Gastrocnemius medialis (tissue), 4 donors: ENCODE measurements at regions of chr11 and their contacts with region 1.

Region 1: DNA sequence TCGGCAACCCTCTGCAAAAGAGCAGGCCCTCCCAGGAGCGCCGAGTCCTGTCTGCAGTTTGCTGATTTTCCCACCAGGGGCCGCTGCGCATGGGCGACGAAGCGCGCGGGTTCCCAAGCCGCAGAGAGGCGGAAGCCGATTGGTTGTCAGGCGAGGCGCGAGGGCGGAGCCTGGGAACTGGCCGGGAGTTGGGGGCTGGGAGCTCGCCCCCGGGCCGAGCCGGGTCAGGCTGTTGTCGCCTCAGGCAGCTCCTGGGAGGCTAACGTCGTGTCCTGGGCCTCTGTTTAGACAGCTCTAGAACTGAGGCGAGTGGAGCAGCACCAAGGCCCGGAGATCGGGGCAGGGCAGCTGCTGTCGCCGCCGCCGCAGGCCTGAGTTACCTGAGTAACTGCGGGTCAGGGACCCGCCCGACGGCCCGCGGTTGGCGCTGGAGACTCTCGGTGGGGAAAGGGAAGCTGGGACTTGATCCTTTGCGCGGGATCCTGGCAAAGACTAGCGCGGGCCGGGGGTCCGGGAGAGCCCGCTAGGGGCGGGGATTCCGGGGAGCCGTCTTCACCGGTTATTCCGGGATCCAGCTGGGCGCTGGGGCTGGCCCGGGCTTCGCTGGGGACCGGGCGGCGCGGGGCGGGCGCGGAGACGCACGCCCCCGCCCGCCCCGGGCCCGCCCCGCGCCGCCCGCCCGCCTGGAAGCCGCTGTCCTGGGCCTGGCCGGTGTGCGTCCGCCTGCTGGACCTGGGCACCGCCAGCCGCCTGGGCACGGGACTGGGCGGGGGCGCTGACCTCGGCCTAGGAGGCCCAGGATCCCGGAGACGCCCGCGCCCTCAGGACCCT is at the start of gene STIM1:
- DNase-seq: peak; percentile 93 to 95
- ATAC-seq: peak; percentile 57 to 61
- H3K4me3 ChIP-seq: peak within 1 kb of the TSS; percentile 91 to 97 (median 96)
- H3K27ac ChIP-seq: peak within 1 kb of the TSS; percentile 99 to 100 (median 100)
- H3K4me1 ChIP-seq: peaks cover 53 to 57% of the 10 kb centered on the region in 2 donors
- H3K27me3 ChIP-seq: no peaks in the 10 kb centered on the region
- CTCF ChIP-seq: peak; percentile 97 to 99 (median 99)
- POLR2A ChIP-seq: peak; percentile 91 to 95
- total RNA-seq, gene STIM1: 45.9 to 132 (median 87.3) TPM

Region 2: GRCh38 chr11:3929649-3930048 is 74.5 kb after region 1 on chr11:
- in situ Hi-C with region 1: loop called in 1 of 4 experiments (anchors 10 kb)
- intact Hi-C with region 1: loop called (anchors 5 kb)
- DNase-seq: peak; percentile 70 to 81
- ATAC-seq: peak; percentile 96
- H3K4me3 ChIP-seq: no peak overlapping the region
- H3K27ac ChIP-seq: peak overlapping the region; percentile 81 to 92 (median 87)
- H3K4me1 ChIP-seq: peaks cover 75 to 80% of the 10 kb centered on the region in 2 donors
- H3K27me3 ChIP-seq: no peaks in the 10 kb centered on the region
- CTCF ChIP-seq: no peak
- POLR2A ChIP-seq: peak; percentile 20 to 31

Region 3: GRCh38 chr11:3947061-3947460 is 91.9 kb after region 1 on chr11:
- in situ Hi-C with region 1: loop called in 1 of 4 experiments (anchors 25 kb)
- intact Hi-C with region 1: loop called (anchors 5 kb)
- DNase-seq: peak; percentile 40 to 54
- ATAC-seq: peak; percentile 26 to 56
- H3K4me3 ChIP-seq: peak overlapping the region in 1 of 4 donors; percentile 4
- H3K27ac ChIP-seq: peak overlapping the region; percentile 81 to 92 (median 84)
- H3K4me1 ChIP-seq: peaks cover 91 to 94% of the 10 kb centered on the region in 2 donors
- H3K27me3 ChIP-seq: no peaks in the 10 kb centered on the region
- CTCF ChIP-seq: no peak
- POLR2A ChIP-seq: no peak

Region 4: DNA sequence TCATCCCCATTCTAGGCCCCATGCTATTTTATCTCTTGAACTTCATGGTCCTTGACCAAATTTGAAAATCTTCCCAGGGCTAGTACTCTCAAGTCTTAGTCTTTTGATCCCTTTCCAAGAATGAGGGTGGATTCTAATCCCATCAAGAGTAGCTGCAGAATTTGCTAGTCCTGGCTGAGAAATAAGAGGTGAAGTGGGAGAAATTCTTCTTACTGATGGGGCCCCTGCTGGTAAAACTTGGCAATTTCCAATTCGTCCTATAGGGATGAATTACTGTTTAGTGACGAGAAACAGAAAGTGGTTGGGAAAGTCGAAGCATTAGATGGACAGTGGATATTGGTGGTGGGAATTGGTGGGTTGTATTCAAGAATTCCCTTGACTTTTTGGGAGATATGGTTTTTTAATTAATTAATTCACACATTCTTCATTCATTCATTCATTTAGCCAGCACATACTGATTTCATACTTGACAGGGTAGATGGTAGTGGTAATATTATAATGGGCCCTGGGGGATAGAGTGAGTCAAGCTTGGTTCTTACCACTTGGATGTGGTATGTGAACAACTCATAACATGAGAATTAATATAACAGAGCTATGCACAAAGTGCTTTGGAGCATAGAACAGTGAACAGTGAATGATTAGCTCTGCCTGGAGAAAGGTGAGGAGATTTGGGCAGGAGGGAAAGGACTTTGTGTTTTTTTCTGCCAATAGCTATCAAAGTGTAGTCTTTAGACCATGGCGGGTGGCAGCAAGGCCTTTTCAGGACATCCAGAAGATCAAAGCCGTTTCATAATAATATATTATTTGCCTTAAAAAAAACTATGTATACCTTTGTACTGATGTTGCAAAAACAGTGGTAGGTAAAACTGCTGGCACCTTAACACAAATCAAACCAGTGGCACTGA is 104.1 kb after region 1 on chr11:
- in situ Hi-C with region 1: loop called in 1 of 4 experiments (anchors 25 kb)
- intact Hi-C with region 1: no loop called
- DNase-seq: no peak
- ATAC-seq: no peak
- H3K4me3 ChIP-seq: no peak overlapping the region
- H3K27ac ChIP-seq: no peak overlapping the region
- H3K4me1 ChIP-seq: peaks cover 52 to 60% of the 10 kb centered on the region in 2 donors
- H3K27me3 ChIP-seq: no peaks in the 10 kb centered on the region
- CTCF ChIP-seq: peak in 1 of 5 experiments; percentile 20
- POLR2A ChIP-seq: no peak

Region 5: DNA sequence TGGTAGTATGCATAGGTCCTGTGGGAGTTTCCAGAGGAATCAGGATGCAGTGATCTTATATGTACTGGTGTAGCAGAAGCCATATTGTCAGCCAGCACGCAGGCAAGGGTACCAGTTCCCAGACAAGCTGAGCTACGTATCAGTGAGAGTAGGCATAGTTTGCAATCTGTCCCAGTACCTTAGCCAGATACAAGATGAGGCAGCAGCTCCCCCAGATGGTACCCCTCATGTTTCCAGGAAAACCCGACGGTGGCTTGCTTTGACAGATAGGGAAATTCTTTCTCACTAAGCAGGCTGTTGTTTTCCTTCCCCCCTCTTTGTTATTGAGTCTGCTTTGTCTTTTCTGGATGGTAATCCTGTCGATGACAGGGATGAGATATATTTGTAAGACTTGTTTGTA is 129.7 kb after region 1 on chr11:
- in situ Hi-C with region 1: no loop called
- intact Hi-C with region 1: loop called (anchors 5 kb)
- DNase-seq: no peak
- ATAC-seq: peak; percentile 27 to 31
- H3K4me3 ChIP-seq: no peak overlapping the region
- H3K27ac ChIP-seq: peak overlapping the region in 3 of 4 donors; percentile 2 to 42 (median 38)
- H3K4me1 ChIP-seq: peaks cover 65 to 69% of the 10 kb centered on the region in 2 donors
- H3K27me3 ChIP-seq: no peaks in the 10 kb centered on the region
- CTCF ChIP-seq: no peak
- POLR2A ChIP-seq: no peak

Region 6: DNA sequence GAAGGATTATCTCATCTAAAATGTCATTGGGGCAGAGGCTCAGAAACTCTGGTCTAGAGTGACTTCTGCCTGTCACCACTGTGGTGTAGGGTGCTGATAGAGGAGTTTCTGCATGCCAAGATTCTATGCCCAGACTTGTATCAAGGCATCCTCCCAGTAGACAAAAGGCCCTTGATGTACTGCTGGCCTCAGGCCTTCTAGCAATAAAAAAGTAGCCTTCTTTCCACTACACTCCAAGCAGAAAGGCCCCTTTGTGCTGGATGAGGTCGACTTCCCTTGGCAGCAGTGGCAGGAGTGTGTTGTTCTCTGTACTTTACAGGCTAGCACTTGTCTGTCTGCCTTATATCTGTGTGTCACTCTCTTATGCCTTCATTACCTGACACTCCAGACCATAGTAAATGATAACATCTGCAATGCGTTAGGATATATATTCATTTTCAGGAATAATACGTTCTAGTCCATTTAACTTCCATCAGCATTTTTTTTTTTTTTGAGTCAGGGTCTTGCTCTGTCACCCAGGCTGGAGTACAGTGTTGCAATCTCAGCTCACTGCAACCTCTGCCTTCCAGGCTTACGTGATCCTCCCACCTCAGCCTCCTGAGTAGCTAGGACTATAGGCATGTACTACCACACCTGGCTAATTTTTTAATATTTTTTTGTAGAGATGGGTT is 189.9 kb after region 1 on chr11:
- in situ Hi-C with region 1: loop called in 1 of 4 experiments (anchors 10 kb)
- intact Hi-C with region 1: loop called (anchors 1 kb)
- DNase-seq: peak in 1 of 2 donors; percentile 36
- ATAC-seq: peak in 1 of 2 donors; percentile 3
- H3K4me3 ChIP-seq: no peak overlapping the region
- H3K27ac ChIP-seq: peak overlapping the region; percentile 78 to 91 (median 88)
- H3K4me1 ChIP-seq: peaks cover 29 to 57% of the 10 kb centered on the region in 2 donors
- H3K27me3 ChIP-seq: no peaks in the 10 kb centered on the region
- CTCF ChIP-seq: no peak
- POLR2A ChIP-seq: no peak

Region 7: DNA sequence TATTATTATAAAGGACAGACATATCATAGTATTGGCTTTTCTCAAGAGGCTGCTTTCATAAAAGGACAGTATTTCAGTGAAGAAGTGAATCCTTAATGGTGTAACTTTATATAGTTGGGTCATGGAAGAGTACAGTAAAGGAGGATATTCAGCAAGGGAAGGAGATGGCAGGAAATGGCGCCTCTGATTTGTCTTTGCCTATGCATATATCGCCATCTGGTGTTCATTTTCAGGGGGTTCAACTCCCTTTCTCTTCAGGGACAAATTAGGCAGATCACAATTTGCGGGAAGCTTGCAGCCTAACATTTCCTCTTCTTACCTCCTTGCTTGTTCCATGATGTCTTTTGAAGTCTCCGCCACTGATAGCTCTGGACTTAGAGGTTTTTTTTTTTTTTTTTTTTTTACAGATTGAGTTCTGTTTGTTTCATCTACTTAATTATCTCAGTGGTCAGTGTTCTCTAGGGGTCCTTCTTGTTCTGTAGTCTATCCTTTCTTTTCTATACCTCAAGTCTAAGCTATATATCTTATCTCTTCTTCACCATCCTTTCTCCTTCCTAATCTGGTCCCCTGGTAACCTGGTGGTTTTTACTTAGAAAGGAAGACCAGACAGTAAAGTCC is 217.6 kb after region 1 on chr11:
- in situ Hi-C with region 1: loop called in 2 of 4 experiments (anchors 5 kb)
- intact Hi-C with region 1: loop called (anchors 1 kb)
- DNase-seq: peak; percentile 53 to 55
- ATAC-seq: peak; percentile 82 to 85
- H3K4me3 ChIP-seq: no peak overlapping the region
- H3K27ac ChIP-seq: peak overlapping the region; percentile 42 to 73 (median 56)
- H3K4me1 ChIP-seq: peaks cover 35 to 54% of the 10 kb centered on the region in 2 donors
- H3K27me3 ChIP-seq: no peaks in the 10 kb centered on the region
- CTCF ChIP-seq: peak; percentile 83 to 94 (median 89)
- POLR2A ChIP-seq: no peak